Panc1 (cell line): ENCODE measurements at regions of chr10 and their contacts with region 1.

Region 1: GRCh38 chr10:37976091-37976879 is at the start of gene ZNF25:
- DNase-seq: peak; percentile 90
- ATAC-seq: peak; percentile 98
- H3K4me3 ChIP-seq: peak within 1 kb of the TSS; percentile 67 to 71
- H3K27ac ChIP-seq: peak within 1 kb of the TSS; percentile 80
- H3K4me1 ChIP-seq: no peaks in the 10 kb centered on the region
- H3K27me3 ChIP-seq: no peaks in the 10 kb centered on the region
- CTCF ChIP-seq: peak; percentile 90
- total RNA-seq, gene ZNF25: 2.9 TPM

Region 2: DNA sequence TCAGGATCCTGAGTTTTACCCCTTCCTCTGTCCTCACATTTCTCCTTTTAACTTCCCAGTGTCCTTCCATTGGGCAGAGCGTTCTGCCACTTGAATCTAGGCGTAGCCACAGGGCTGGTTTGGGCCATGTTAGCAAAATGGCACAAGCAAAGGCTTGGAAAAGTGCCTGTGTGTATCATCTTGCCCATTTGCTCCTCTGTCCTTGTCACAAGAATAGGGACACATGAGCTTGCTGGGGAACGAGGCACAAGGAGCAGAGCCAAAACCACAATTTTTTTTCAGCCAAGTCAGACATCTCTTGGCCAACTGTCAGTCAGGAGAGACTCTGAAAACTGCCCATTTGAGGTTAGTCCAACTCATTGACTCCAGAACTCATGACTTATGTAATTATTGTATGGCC is 404.1 kb before region 1 on chr10:
- CTCF ChIA-PET with region 1: no interaction called
- POLR2A ChIA-PET with region 1: no interaction called
- in situ Hi-C with region 1: no loop called
- intact Hi-C with region 1: no loop called
- DNase-seq: no peak
- ATAC-seq: no peak
- H3K4me3 ChIP-seq: no peak overlapping the region
- H3K27ac ChIP-seq: no peak overlapping the region
- H3K4me1 ChIP-seq: no peaks in the 10 kb centered on the region
- H3K27me3 ChIP-seq: no peaks in the 10 kb centered on the region
- CTCF ChIP-seq: no peak

Region 3: GRCh38 chr10:37684765-37685164 is 291.5 kb before region 1 on chr10:
- CTCF ChIA-PET with region 1: no interaction called
- POLR2A ChIA-PET with region 1: no interaction called
- in situ Hi-C with region 1: no loop called
- intact Hi-C with region 1: no loop called
- DNase-seq: no peak
- ATAC-seq: no peak
- H3K4me3 ChIP-seq: no peak overlapping the region
- H3K27ac ChIP-seq: no peak overlapping the region
- H3K4me1 ChIP-seq: no peaks in the 10 kb centered on the region
- H3K27me3 ChIP-seq: no peaks in the 10 kb centered on the region
- CTCF ChIP-seq: no peak

Region 4: DNA sequence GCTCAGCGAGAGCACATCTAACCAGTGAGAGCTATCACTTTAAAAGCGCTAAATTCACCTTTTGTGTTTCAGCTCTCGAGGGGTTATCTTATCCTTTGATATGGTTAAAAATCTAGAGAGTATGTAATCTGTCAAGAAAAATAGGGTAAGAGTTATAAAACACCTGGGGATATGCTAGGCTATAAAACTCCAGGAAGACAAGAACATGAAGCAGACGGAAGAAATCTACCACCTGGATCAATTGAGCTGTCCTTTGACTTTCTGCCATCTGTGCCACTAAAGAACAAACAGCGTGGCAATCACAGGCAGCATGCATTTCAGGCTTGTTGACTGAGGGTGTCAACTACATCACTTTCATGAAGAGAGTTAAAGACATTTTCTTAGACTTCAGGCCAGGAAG is 201.9 kb before region 1 on chr10:
- CTCF ChIA-PET with region 1: no interaction called
- POLR2A ChIA-PET with region 1: no interaction called
- in situ Hi-C with region 1: no loop called
- intact Hi-C with region 1: no loop called
- DNase-seq: no peak
- ATAC-seq: no peak
- H3K4me3 ChIP-seq: no peak overlapping the region
- H3K27ac ChIP-seq: no peak overlapping the region
- H3K4me1 ChIP-seq: no peaks in the 10 kb centered on the region
- H3K27me3 ChIP-seq: no peaks in the 10 kb centered on the region
- CTCF ChIP-seq: no peak

Region 5: GRCh38 chr10:37826806-37827205 is 149.5 kb before region 1 on chr10:
- CTCF ChIA-PET with region 1: interaction called, 10 read pairs
- POLR2A ChIA-PET with region 1: no interaction called
- in situ Hi-C with region 1: no loop called
- intact Hi-C with region 1: no loop called
- DNase-seq: no peak
- ATAC-seq: no peak
- H3K4me3 ChIP-seq: no peak overlapping the region
- H3K27ac ChIP-seq: no peak overlapping the region
- H3K4me1 ChIP-seq: no peaks in the 10 kb centered on the region
- H3K27me3 ChIP-seq: no peaks in the 10 kb centered on the region
- CTCF ChIP-seq: no peak

Region 6: DNA sequence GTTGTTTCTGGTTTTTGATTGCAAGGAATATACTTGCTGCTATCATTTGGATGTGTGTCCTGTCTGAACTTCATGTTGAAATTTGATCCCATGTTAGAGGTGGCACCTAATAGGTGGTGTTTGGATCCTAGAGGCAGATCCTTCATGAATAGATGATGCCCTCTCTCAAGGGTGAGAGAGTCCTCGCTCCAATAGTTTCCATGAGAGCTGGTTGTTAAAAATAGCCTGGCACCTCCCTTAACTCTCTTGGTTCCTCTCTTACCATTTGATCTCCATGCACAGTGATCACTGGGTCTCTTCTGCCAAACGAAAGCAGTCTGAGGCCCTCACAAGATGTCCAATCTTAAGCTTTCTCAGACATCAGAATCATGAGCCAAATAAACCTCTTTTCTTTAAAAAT is 69.9 kb before region 1 on chr10:
- CTCF ChIA-PET with region 1: no interaction called
- POLR2A ChIA-PET with region 1: no interaction called
- in situ Hi-C with region 1: no loop called
- intact Hi-C with region 1: no loop called
- DNase-seq: no peak
- ATAC-seq: no peak
- H3K4me3 ChIP-seq: no peak overlapping the region
- H3K27ac ChIP-seq: no peak overlapping the region
- H3K4me1 ChIP-seq: no peaks in the 10 kb centered on the region
- H3K27me3 ChIP-seq: no peaks in the 10 kb centered on the region
- CTCF ChIP-seq: no peak

Region 7: DNA sequence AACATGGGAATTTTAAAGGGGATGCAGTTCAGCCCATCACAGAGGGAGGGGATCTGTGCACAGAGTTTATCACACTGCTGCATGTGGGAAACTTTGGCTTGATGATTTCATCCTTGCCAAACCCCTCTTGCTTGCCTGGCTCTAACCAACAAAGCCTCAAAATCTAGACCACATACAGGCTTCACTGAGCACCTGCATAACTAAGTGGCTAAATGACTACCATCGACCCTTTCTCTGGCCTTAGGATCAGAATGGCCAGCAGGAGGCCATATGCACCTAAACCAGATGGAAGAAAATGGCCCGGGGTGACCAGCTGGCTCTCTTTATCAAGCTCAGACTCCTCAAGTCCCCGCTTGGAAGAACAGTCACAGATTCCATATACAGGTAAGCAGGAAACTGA is 15.8 kb after region 1 on chr10:
- CTCF ChIA-PET with region 1: interaction called, 11 read pairs
- POLR2A ChIA-PET with region 1: no interaction called
- in situ Hi-C with region 1: no loop called
- intact Hi-C with region 1: no loop called
- DNase-seq: no peak
- ATAC-seq: no peak
- H3K4me3 ChIP-seq: no peak overlapping the region
- H3K27ac ChIP-seq: no peak overlapping the region
- H3K4me1 ChIP-seq: no peaks in the 10 kb centered on the region
- H3K27me3 ChIP-seq: no peaks in the 10 kb centered on the region
- CTCF ChIP-seq: no peak

Region 8: DNA sequence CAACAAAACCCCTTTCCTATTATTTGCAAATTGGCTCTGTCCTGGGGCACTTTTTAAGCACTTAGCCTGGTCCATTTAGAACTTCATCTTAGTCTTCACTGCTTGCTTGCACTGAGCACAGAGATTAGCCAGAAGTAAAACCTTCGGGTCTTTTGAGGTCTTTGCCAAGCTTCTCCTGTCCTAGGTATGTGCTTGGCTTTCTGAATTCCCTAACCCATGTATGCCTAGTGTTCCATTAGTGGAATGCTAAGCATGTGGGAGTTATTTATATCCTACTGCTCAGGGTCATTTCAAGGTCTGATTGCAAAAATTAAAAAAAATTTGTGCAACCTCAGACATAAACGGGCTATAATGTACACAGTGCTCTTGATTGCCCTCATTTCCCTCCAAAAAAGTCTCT is 135.9 kb after region 1 on chr10:
- CTCF ChIA-PET with region 1: interaction called, 14 read pairs
- POLR2A ChIA-PET with region 1: no interaction called
- in situ Hi-C with region 1: no loop called
- intact Hi-C with region 1: no loop called
- DNase-seq: no peak
- ATAC-seq: no peak
- H3K4me3 ChIP-seq: no peak overlapping the region
- H3K27ac ChIP-seq: no peak overlapping the region
- H3K4me1 ChIP-seq: no peaks in the 10 kb centered on the region
- H3K27me3 ChIP-seq: no peaks in the 10 kb centered on the region
- CTCF ChIP-seq: no peak